Activated naive CD4-positive, alpha-beta T cell treated with anti-CD3 and anti-CD28 coated beads for 36 hours (primary cell): ENCODE measurements at regions of chr1 and their contacts with region 1.

Region 1: DNA sequence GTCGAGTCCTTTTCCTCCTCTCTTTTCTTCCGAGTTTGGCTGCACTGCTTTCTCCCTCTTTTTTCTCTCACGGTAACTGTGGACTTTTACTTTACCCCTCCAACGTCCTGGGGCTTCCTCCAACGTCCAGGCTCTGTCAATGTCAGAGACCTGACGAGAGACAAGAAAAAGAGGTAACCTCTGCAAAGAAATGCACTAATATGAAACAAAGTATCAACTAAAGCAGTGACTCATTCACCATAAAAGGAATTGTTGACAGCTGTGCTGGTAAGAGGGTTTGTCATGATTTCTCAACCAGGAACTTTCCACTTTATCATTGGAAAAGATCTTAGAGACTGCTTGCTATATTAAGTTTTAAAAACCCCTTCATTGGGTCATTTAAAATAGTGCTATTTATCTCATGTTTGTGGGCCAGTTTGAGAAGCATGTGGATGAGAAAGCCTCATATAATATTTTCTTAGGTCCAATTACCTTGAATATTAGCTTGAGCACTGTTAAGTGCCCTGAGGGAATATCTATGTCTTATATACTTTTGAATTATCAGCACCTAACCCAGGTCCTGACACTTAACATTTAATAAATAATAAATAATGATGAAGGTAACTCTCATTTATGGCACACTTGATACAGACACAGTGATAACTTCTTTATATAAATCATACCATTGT is at the start of gene GBP2:
- DNase-seq: peak; percentile 44
- H3K4me3 Mint-ChIP-seq: peak within 1 kb of the TSS; percentile 91
- H3K27ac Mint-ChIP-seq: peak within 1 kb of the TSS; percentile 96
- H3K4me1 Mint-ChIP-seq: peaks cover 44% of the 10 kb centered on the region
- H3K27me3 Mint-ChIP-seq: no peaks in the 10 kb centered on the region
- total RNA-seq, gene GBP2: 338 to 351 TPM

Region 2: GRCh38 chr1:88891318-88891950 is 234.6 kb before region 1 on chr1 and contains the start of gene GTF2B:
- CTCF ChIA-PET with region 1: no interaction called
- intact Hi-C with region 1: loop called (anchors 1 kb)
- DNase-seq: peak; percentile 97
- H3K4me3 Mint-ChIP-seq: peak within 1 kb of the TSS; percentile 82
- H3K27ac Mint-ChIP-seq: peak within 1 kb of the TSS; percentile 96
- H3K4me1 Mint-ChIP-seq: peaks cover 36% of the 10 kb centered on the region
- H3K27me3 Mint-ChIP-seq: no peaks in the 10 kb centered on the region
- total RNA-seq, gene GTF2B: 35.2 to 36.1 TPM

Region 3: GRCh38 chr1:89022167-89022959 is 103.7 kb before region 1 on chr1 and contains the start of gene GBP3:
- CTCF ChIA-PET with region 1: no interaction called
- intact Hi-C with region 1: loop called (anchors 1 kb)
- DNase-seq: no peak
- H3K4me3 Mint-ChIP-seq: peak within 1 kb of the TSS; percentile 73
- H3K27ac Mint-ChIP-seq: peak within 1 kb of the TSS; percentile 72
- H3K4me1 Mint-ChIP-seq: peaks cover 51% of the 10 kb centered on the region
- H3K27me3 Mint-ChIP-seq: no peaks in the 10 kb centered on the region
- total RNA-seq, gene GBP3: 1.4 to 1.8 TPM

Region 4: GRCh38 chr1:89065079-89065868 is 60.8 kb before region 1 on chr1 and contains the start of gene GBP1:
- CTCF ChIA-PET with region 1: interaction called, 3 read pairs
- intact Hi-C with region 1: loop called (anchors 1 kb)
- DNase-seq: no peak
- H3K4me3 Mint-ChIP-seq: peak within 1 kb of the TSS; percentile 75
- H3K27ac Mint-ChIP-seq: peak within 1 kb of the TSS; percentile 89
- H3K4me1 Mint-ChIP-seq: peaks cover 53% of the 10 kb centered on the region
- H3K27me3 Mint-ChIP-seq: no peaks in the 10 kb centered on the region
- total RNA-seq, gene GBP1: 48.2 to 52.8 TPM

Region 5: GRCh38 chr1:89171067-89171438 is 45.0 kb after region 1 on chr1:
- CTCF ChIA-PET with region 1: interaction called, 4 read pairs
- intact Hi-C with region 1: loop called (anchors 2 kb)
- DNase-seq: peak; percentile 19
- H3K4me3 Mint-ChIP-seq: no peak overlapping the region
- H3K27ac Mint-ChIP-seq: no peak overlapping the region
- H3K4me1 Mint-ChIP-seq: peaks cover 12% of the 10 kb centered on the region
- H3K27me3 Mint-ChIP-seq: no peaks in the 10 kb centered on the region

Region 6: GRCh38 chr1:89243046-89243445 is 117.0 kb after region 1 on chr1:
- CTCF ChIA-PET with region 1: no interaction called
- intact Hi-C with region 1: no loop called
- DNase-seq: no peak
- H3K4me3 Mint-ChIP-seq: no peak overlapping the region
- H3K27ac Mint-ChIP-seq: no peak overlapping the region
- H3K4me1 Mint-ChIP-seq: peaks cover 18% of the 10 kb centered on the region
- H3K27me3 Mint-ChIP-seq: no peaks in the 10 kb centered on the region

Region 7: GRCh38 chr1:89298461-89298860 is 172.4 kb after region 1 on chr1:
- CTCF ChIA-PET with region 1: interaction called, 4 read pairs
- intact Hi-C with region 1: loop called (anchors 1 kb)
- DNase-seq: no peak
- H3K4me3 Mint-ChIP-seq: no peak overlapping the region
- H3K27ac Mint-ChIP-seq: no peak overlapping the region
- H3K4me1 Mint-ChIP-seq: peaks cover 55% of the 10 kb centered on the region
- H3K27me3 Mint-ChIP-seq: no peaks in the 10 kb centered on the region

Region 8: DNA sequence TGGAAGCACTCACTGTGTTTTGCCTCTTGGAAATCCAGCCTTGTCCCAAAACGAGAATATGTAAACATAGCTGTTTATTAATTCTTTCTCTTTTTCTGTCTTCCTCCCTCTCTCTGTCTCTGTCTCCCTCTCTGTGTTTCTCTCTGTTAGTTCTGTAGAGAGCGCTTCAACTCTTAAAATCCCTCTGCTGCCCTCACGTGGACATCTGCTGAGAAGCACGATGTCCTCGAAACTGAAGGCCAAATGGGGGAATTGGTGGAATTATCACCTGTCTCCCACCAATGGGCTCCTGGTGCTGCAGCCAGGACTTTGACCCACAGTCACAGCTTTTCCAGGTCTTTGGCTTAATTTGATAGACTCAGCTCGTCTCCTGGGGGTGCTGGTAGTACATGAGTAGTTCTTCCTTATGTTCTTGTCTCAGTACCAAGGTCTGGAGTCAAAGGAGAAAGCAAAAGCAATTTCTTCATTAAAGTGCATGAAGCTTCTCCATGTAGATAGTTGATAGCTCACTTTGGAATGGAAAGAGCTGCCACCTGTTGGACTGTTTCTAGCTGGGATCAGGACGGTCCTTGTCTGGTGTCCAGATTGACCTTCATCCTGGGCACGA is 232.3 kb after region 1 on chr1:
- CTCF ChIA-PET with region 1: interaction called, 6 read pairs
- intact Hi-C with region 1: loop called (anchors 1 kb)
- DNase-seq: peak; percentile 91
- H3K4me3 Mint-ChIP-seq: peak overlapping the region; percentile 33
- H3K27ac Mint-ChIP-seq: peak overlapping the region; percentile 65
- H3K4me1 Mint-ChIP-seq: peaks cover 33% of the 10 kb centered on the region
- H3K27me3 Mint-ChIP-seq: no peaks in the 10 kb centered on the region

Region 9: DNA sequence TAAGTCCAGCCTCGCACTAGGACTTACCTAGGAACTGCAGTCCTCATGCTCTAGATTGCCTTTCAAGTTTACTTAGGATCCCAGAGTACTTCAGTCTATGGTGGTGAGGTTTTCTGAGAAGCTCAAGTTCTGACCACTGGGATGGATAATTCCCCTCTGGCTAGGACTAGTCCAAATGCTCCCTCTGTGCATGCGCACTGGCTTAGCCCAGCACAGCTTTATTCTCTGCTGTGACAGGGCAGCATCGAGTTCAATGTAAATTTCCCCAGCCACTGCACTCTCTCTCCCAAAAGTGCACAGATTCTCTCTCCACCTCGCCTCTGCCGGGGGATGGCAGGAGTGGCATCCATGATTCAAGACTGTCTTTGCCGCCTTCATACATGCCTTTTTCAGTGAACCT is 1110.4 kb after region 1 on chr1:
- CTCF ChIA-PET with region 1: no interaction called
- intact Hi-C with region 1: no loop called
- DNase-seq: no peak
- H3K4me3 Mint-ChIP-seq: no peak overlapping the region
- H3K27ac Mint-ChIP-seq: no peak overlapping the region
- H3K4me1 Mint-ChIP-seq: no peaks in the 10 kb centered on the region
- H3K27me3 Mint-ChIP-seq: peaks cover 2% of the 10 kb centered on the region